Aorta (tissue), 5 donors: ENCODE measurements at regions of chr13 and their contacts with region 1.

Region 1: DNA sequence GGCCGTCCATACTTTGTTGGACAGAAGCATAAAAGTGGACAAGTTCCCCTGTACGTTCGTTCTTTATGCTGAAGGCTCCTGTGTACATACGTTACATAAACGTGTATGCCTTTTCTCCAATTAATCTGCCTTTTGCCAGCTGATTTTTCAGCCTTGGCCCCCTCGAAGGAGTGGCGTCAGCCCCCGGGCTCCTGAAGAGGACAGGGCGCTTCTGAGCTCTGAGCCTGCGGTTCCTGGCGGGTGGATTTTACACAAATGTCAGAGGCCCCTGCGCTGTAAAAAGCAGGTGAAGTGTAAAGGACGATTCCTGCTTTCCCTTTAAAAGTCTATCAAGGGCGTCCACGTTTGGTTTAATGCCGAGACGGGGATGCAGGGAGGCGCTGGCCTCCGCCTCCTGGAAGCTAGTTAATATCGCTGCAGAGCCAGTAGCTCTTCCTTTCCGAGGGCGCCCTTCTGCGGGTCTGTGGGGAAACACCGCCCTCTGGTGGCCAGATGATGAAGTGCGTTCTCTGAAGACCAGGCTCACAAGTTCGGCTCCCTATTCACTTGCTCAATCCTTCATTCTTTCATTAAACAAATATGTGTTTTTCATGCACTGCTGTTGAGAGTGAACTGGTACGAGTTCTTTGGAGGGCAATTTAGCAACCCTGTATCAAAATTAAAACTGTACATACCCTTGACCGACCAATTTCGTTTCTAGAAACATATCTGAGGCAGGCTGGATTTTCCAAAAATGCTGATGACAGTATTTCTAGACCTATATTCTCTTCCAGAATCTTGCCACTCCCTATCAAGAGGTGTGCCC is 62.0 kb downstream of the GPR12 start:
- DNase-seq: peak; percentile 85 to 95
- ATAC-seq: peak; percentile 90
- H3K4me3 ChIP-seq: no peak overlapping the region
- H3K27ac ChIP-seq: no peak overlapping the region
- H3K4me1 ChIP-seq: no peaks in the 10 kb centered on the region
- H3K27me3 ChIP-seq: no peaks in the 10 kb centered on the region

Region 2: GRCh38 chr13:26482451-26483197 is 216.0 kb before region 1 on chr13:
- intact Hi-C with region 1: loop called (anchors 5 kb)
- DNase-seq: peak in 1 of 2 donors; percentile 65
- ATAC-seq: peak; percentile 35
- H3K4me3 ChIP-seq: no peak overlapping the region
- H3K27ac ChIP-seq: no peak overlapping the region
- H3K4me1 ChIP-seq: no peaks in the 10 kb centered on the region
- H3K27me3 ChIP-seq: no peaks in the 10 kb centered on the region

Region 3: DNA sequence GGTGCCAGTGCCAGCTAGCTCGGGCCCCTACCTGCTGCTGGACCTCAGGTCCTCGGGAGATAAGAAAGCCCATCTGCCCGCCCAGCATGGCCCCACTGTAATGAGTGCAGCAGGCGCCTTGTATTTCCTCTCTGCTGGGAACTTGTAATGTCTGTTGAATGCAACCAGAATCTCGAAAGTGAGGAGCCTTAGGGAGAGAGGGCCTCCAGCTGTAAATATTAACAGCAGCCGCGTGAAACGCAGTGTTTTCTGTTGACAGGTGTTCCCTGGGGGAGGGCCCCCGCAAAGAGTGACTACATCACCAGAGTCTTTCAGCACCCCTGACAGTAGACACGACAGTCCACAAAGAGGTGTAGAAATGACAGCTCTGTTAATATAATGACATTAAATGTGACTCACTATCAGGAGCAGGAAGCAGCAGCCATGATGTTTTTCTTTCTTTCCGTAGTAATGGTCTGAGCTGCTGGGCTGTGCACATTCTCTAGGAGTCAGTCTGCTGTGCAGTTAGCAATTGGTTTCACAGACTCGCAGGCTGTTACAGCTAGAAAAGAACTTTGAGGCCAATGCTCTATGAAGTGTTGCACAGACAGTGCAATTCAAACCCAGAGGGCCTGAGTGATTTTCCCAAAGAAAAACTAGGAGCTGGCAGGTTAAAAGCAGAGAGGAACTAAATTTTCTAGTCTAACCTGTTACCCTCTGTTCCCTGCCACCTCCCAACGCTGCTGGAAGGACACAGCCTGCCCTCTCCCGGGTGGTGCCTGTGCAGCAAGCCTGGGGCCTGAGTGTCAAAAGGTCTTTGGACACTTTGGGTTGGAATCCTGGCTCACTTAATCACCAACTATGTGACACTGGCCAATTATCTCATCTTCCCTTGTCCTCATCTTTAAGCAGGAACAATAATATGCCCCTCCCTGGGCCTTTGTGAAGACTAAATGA is 199.7 kb before region 1 on chr13:
- intact Hi-C with region 1: loop called (anchors 5 kb)
- DNase-seq: no peak
- ATAC-seq: no peak
- H3K4me3 ChIP-seq: no peak overlapping the region
- H3K27ac ChIP-seq: no peak overlapping the region
- H3K4me1 ChIP-seq: no peaks in the 10 kb centered on the region
- H3K27me3 ChIP-seq: no peaks in the 10 kb centered on the region

Region 4: DNA sequence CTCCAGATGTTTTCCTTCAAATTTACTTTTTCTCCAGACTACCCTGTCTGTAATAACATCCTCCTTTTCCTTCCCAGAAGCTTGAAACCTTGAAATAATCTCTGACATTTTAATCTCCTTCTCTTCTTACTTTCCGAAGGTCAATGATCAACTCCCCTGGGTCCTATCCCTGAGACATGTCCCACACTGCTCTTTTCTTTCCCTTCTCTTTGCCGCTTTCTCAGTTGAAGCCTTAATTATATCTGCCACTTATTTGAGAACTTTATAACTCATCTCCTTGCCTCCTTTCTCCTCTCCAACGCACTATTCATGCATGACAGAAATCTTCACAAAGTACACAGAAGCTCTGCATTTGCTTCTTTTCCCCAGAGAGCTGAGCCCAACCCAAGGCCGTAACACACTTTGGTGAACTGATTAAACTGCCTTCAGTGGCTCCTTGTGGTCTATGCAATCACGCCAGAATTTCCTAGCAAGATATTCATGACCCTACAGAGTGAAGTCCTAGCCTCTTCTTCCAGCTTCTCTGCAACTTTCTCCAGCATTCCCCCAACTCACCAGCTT is 150.3 kb before region 1 on chr13:
- intact Hi-C with region 1: no loop called
- DNase-seq: no peak
- ATAC-seq: no peak
- H3K4me3 ChIP-seq: no peak overlapping the region
- H3K27ac ChIP-seq: no peak overlapping the region
- H3K4me1 ChIP-seq: no peaks in the 10 kb centered on the region
- H3K27me3 ChIP-seq: peaks cover 0 to 4% of the 10 kb centered on the region in 2 donors

Region 5: GRCh38 chr13:26897706-26898550 is 199.3 kb after region 1 on chr13:
- intact Hi-C with region 1: no loop called
- DNase-seq: no peak
- ATAC-seq: no peak
- H3K4me3 ChIP-seq: no peak overlapping the region
- H3K27ac ChIP-seq: no peak overlapping the region
- H3K4me1 ChIP-seq: no peaks in the 10 kb centered on the region
- H3K27me3 ChIP-seq: no peaks in the 10 kb centered on the region